Cardiac septum (tissue), 1 donor: ENCODE measurements at regions of chr17 and their contacts with region 1.

Region 1: GRCh38 chr17:55348749-55349354 is 72.8 kb downstream of the MMD start:
- DNase-seq: no peak

Region 2: DNA sequence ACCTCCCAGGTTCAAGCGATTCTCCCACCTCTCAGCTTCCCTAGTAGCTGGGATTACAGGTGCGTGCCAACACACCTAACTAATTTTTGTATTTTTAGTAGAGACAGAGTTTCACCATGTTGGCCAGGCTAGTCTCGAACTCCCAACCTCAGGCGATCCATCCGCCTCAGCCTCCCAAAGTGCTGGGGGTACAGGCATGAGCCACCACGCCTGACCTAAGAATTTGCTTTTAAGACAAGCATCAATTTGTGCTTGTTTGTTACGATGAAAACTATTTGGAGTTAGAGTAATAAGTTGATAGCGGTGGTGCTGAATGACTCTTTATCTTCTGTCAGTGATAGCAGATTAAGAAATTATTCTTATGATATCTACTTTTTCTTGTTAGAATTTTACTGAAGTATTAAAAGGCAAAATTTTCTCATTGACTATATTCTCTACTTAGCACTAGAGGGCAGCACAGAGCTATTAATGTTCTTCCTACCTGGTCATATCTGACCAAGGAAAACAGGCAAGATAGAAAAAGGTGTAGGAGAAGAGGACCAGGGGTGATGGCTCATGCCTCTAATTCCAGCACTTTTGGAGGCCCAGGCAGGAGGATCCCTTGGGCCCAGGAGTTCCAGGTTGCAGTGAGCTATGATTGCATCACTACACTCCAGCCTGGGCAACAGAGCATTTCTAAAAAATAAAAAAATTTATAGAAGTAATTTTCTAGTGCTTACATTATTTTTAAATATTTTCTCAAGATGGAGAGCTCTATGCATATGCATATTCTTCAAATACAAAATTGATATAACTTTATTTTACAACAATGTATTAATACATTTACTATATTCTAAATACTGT is 355.8 kb before region 1 on chr17:
- intact Hi-C with region 1: loop called (anchors 5 kb)
- DNase-seq: no peak

Region 3: DNA sequence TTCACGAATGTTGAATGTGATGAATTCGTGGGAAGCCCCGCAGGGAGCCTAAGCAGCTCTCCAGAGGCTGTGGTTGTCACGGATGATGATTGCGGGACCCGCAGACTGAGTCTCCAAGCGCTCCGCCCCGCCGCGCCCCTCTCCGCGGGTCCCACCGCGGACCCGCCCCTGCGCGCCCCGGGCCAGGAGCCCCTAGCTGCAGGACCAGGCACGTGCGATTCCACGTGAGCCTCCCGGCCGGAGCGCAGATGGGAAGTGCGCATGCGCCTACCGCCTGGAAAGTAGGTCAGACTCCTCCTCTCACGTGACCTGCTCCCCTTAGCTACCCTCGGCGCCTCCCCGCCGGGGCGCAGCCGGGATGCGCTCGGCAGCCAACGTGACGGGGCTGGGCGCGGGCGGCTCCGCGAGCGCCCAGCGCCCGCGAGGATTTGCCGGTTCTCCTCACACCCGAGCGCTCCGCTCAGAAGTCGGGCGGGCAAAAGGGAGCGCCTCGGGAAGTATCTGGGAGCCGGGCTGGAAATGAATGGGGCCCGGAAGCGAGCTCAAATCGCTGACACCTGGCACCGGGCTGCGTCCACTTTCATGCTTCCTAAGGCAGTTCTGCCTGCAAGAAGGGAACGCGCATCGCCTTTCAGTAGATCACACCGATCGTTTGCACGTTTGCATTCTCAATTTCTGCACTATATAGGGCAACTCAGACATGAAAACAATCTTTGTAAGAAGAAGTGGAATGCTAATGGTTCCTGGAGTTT is 110.5 kb before region 1 on chr17:
- intact Hi-C with region 1: loop called (anchors 10 kb)
- DNase-seq: peak; percentile 95

Region 4: GRCh38 chr17:55264645-55265298 is 84.1 kb before region 1 on chr17 and contains the start of gene HLF:
- intact Hi-C with region 1: loop called (anchors 10 kb)
- DNase-seq: peak; percentile 88
- total RNA-seq, gene HLF: 9.8 TPM

Region 5: GRCh38 chr17:55452139-55452790 is 103.4 kb after region 1 on chr17:
- intact Hi-C with region 1: no loop called
- DNase-seq: no peak